ENCODE measurements at regions of chr12 and their contacts with region 1.

Region 1: GRCh38 chr12:89470741-89471509 is 53.7 kb downstream of the GALNT4 start:
- H3K4me3 Mint-ChIP-seq: no peak overlapping the region
- H3K27ac Mint-ChIP-seq: no peak overlapping the region
- H3K4me1 Mint-ChIP-seq: peaks cover 20% of the 10 kb centered on the region
- H3K27me3 Mint-ChIP-seq: no peaks in the 10 kb centered on the region

Region 2: DNA sequence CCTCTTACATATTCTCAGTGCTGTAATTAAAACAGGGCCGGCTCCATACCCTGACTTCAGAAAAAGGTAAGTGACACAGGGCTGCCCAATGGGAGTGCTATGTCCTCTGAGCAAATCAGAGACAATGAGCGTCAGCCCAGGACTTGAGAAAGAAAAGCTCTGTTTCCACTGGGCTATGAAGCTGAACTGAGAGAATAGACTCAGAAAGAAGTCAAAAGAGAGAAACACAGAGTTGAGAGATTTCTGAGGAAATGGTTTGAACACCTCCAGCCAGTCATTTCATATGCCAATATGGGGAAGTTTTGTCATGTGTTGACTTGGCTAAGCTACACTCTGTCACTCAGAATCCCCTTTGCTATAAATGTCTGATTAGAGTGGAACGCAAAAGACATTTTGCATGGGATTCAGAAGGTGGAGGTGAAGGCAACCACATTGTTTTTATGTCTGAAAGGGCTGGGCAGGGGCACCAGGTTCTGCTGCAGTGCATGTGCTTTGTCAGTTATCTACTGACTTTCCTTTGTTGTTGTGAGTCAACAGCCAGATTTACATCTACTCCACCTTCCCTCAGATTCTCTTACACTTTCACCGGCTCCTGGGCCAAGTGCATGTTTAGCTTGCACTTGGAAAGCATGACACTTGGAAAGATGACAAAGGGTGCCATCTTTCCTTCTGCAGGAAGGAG is 432.0 kb before region 1 on chr12:
- intact Hi-C with region 1: loop called (anchors 5 kb)
- H3K4me3 Mint-ChIP-seq: no peak overlapping the region
- H3K27ac Mint-ChIP-seq: peak overlapping the region; percentile 23
- H3K4me1 Mint-ChIP-seq: peaks cover 42% of the 10 kb centered on the region
- H3K27me3 Mint-ChIP-seq: peaks cover 2% of the 10 kb centered on the region

Region 3: GRCh38 chr12:89529738-89530137 is 58.8 kb after region 1 on chr12:
- intact Hi-C with region 1: loop called (anchors 1 kb)
- H3K4me3 Mint-ChIP-seq: no peak overlapping the region
- H3K27ac Mint-ChIP-seq: no peak overlapping the region
- H3K4me1 Mint-ChIP-seq: peaks cover 16% of the 10 kb centered on the region
- H3K27me3 Mint-ChIP-seq: no peaks in the 10 kb centered on the region